ENCODE measurements at regions of chr4 and their contacts with region 1.

Region 1: DNA sequence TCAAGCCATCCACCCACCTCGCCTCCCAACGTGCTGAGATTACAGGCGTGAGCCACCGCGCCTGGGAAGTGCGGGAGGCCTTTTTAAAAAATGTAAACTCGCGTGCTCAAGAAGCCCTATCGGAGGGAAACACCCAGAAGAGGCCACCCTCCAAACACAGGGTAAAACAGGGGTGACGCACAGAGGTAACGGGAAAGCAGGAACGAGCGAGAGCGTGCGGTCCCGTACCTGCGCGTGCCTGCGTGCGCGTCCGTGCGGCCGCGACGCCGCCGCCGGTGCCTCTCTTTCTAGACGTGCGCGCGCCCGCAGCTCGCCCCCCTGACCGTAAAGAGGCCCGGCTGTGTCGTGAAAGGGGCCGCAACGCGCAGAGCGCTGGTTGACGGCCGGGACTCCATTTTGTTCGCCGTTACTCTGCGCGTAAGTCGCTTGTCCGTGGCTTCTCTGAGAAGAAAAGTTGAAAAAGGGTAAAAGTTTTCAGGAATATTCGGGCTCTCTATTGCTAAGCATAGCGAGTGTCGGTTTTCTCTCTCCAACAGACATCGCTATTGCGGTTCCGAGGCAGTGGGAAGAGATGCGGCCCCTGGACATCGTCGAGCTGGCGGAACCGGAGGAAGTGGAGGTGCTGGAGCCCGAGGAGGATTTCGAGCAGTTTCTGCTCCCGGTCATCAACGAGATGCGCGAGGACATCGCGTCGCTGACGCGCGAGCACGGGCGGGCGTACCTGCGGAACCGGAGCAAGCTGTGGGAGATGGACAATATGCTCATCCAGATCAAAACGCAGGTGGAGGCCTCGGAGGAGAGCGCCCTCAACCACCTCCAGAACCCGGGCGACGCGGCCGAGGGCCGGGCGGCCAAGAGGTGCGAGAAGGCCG is at the start of gene MRFAP1:
- DNase-seq: peak; percentile 96
- H3K4me3 ChIP-seq: peak within 1 kb of the TSS; percentile 80 to 98 (median 97)
- H3K27ac ChIP-seq: peak within 1 kb of the TSS; percentile 93
- H3K4me1 ChIP-seq: peaks cover 11% of the 10 kb centered on the region
- H3K27me3 ChIP-seq: no peaks in the 10 kb centered on the region
- CTCF ChIP-seq: no peak
- POLR2A ChIP-seq: peak; percentile 89
- total RNA-seq, gene MRFAP1: 317 and 335 TPM in 2 replicates

Region 2: DNA sequence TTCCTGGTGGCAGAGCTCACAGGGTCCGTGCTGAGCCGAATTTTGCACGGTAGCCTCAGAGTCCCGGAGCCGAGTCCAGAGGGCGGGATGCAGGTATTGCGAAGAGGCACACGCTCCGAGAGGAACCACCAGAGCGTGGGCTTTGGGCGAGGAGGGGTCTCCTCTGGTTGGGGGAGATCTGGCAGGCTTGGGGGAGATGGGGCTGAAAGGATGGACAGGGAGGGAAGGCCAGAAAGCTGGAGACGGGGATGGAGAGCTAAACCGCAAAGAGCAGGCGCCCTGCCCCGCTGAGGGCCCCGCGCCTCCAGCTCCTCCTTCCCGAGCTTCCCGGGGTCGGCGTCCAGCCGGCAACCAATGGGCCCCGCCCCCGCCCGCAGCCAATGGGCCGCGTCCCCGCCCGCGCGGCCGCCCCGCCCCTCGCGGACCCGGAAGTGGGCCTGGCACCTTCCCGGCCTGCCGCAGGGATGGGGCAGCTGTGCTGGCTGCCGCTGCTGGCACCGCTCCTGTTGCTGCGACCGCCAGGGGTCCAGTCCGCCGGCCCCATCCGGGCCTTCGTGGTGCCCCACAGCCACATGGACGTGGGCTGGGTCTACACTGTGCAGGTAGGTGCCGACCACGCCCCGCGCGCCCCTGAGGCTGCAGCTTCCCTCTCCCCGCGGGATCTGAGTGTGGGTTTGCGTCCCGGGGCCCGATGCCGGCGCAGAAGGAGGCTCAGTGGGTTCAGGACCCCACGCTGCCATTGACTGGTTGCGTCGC is 65.6 kb before region 1 on chr4 and contains the start of gene MAN2B2:
- CTCF ChIA-PET with region 1: no interaction called
- POLR2A ChIA-PET with region 1: interaction called, 3 read pairs
- dilution Hi-C with region 1: no loop called
- intact Hi-C with region 1: loop called (anchors 1 kb)
- DNase-seq: peak; percentile 78
- H3K4me3 ChIP-seq: peak within 1 kb of the TSS; percentile 64 to 76 (median 74)
- H3K27ac ChIP-seq: peak within 1 kb of the TSS; percentile 34
- H3K4me1 ChIP-seq: peaks cover 8% of the 10 kb centered on the region
- H3K27me3 ChIP-seq: peaks cover 4 to 7% of the 10 kb centered on the region in 2 experiments
- CTCF ChIP-seq: peak in 1 of 2 donors; percentile 26
- POLR2A ChIP-seq: peak; percentile 94
- total RNA-seq, gene MAN2B2: 15.7 and 24.2 TPM in 2 replicates

Region 3: GRCh38 chr4:6673660-6674499 is 33.4 kb after region 1 on chr4:
- CTCF ChIA-PET with region 1: interaction called, 6 read pairs
- POLR2A ChIA-PET with region 1: interaction called, 7 read pairs
- dilution Hi-C with region 1: no loop called
- intact Hi-C with region 1: loop called (anchors 1 kb)
- DNase-seq: peak; percentile 97
- H3K4me3 ChIP-seq: peak overlapping the region; percentile 25 to 71 (median 49)
- H3K27ac ChIP-seq: no peak overlapping the region
- H3K4me1 ChIP-seq: peaks cover 10% of the 10 kb centered on the region
- H3K27me3 ChIP-seq: no peaks in the 10 kb centered on the region
- CTCF ChIP-seq: no peak
- POLR2A ChIP-seq: peak; percentile 77

Region 4: GRCh38 chr4:6709230-6710114 is 68.9 kb after region 1 on chr4 and contains the start of gene MRFAP1L1:
- CTCF ChIA-PET with region 1: interaction called, 3 read pairs
- POLR2A ChIA-PET with region 1: interaction called, 4 read pairs
- dilution Hi-C with region 1: no loop called
- intact Hi-C with region 1: loop called (anchors 1 kb)
- DNase-seq: peak; percentile 97
- H3K4me3 ChIP-seq: peak within 1 kb of the TSS; percentile 63 to 81 (median 71)
- H3K27ac ChIP-seq: peak within 1 kb of the TSS; percentile 34
- H3K4me1 ChIP-seq: peaks cover 13% of the 10 kb centered on the region
- H3K27me3 ChIP-seq: peaks cover 4 to 7% of the 10 kb centered on the region in 2 experiments
- CTCF ChIP-seq: no peak
- POLR2A ChIP-seq: peak; percentile 69
- total RNA-seq, gene MRFAP1L1: 42.0 and 43.8 TPM in 2 replicates

Region 5: GRCh38 chr4:7067452-7068278 is 427.1 kb after region 1 on chr4 and contains the start of gene GRPEL1:
- CTCF ChIA-PET with region 1: no interaction called
- POLR2A ChIA-PET with region 1: no interaction called
- dilution Hi-C with region 1: no loop called
- intact Hi-C with region 1: loop called (anchors 1 kb)
- DNase-seq: peak; percentile 100
- H3K4me3 ChIP-seq: peak within 1 kb of the TSS; percentile 62 to 99 (median 71)
- H3K27ac ChIP-seq: peak within 1 kb of the TSS; percentile 57
- H3K4me1 ChIP-seq: peaks cover 20% of the 10 kb centered on the region
- H3K27me3 ChIP-seq: peaks cover 0 to 3% of the 10 kb centered on the region in 2 experiments
- CTCF ChIP-seq: no peak
- POLR2A ChIP-seq: peak; percentile 94
- total RNA-seq, gene GRPEL1: 42.6 and 47.3 TPM in 2 replicates

Region 6: DNA sequence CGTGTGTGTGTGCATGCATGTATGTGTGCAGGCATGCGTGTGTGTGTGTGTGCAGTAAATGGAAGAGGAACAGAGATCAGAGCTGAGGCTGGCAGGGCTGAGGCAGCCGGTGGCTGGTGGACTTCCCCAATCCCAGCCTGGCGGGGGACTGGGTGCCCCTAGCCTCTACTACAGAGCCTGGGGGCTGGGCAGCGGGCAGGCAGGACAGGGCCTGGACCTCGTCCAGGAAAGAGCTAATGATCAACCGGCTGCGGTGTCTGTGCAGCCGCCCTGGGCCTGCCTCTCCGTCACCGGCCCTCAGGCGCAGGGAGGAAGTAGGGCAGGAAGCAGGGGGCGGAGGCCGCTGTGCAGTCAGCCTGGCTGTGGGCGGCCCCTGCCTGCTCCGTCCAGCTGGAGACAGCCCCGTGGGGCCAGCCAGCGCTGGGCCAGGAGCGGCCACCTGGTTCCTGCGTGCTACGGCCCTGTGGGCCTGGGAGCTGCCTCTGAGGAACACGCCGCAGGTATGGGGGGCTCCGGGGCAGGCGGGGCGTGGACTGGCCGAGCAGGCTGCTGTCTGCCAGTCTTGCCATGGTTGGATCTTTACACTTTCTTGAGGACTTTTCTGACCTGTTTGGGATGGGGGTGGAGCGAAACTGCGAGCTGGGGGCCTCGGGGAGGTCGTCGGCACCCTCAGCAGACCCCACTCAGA is 1558.5 kb after region 1 on chr4 and contains the start of gene SH3TC1:
- CTCF ChIA-PET with region 1: no interaction called
- POLR2A ChIA-PET with region 1: no interaction called
- dilution Hi-C with region 1: no loop called
- intact Hi-C with region 1: no loop called
- DNase-seq: peak; percentile 94
- H3K4me3 ChIP-seq: peak within 1 kb of the TSS; percentile 72 to 77 (median 76)
- H3K27ac ChIP-seq: peak within 1 kb of the TSS; percentile 82
- H3K4me1 ChIP-seq: peaks cover 63% of the 10 kb centered on the region
- H3K27me3 ChIP-seq: no peaks in the 10 kb centered on the region
- CTCF ChIP-seq: no peak
- POLR2A ChIP-seq: peak; percentile 95
- total RNA-seq, gene SH3TC1: 174 and 192 TPM in 2 replicates

Measured in endothelial cell of umbilical vein (primary cell).